Sigmoid colon (tissue), 7 donors: ENCODE measurements at regions of chr22 and their contacts with region 1.

Region 1: GRCh38 chr22:49852898-49853894 is at the start of gene ZBED4:
- DNase-seq: peak; percentile 97
- H3K4me3 ChIP-seq: peak within 1 kb of the TSS; percentile 52 to 70 (median 63)
- H3K27ac ChIP-seq: peak within 1 kb of the TSS; percentile 91 to 94 (median 92)
- H3K4me1 ChIP-seq: peaks cover 0 to 49% (median 40%) of the 10 kb centered on the region in 4 donors
- H3K27me3 ChIP-seq: peaks cover 16 to 26% (median 20%) of the 10 kb centered on the region in 3 donors
- CTCF ChIP-seq: no peak
- EP300 ChIP-seq: peak in 1 of 4 donors; percentile 28
- POLR2A ChIP-seq: peak; percentile 27 to 54
- total RNA-seq, gene ZBED4: 3.9 to 7.5 (median 5.5) TPM

Region 2: GRCh38 chr22:49789289-49790141 is 63.7 kb before region 1 on chr22:
- intact Hi-C with region 1: loop called (anchors 2 kb)
- DNase-seq: no peak
- H3K4me3 ChIP-seq: no peak overlapping the region
- H3K27ac ChIP-seq: peak overlapping the region; percentile 49 to 83 (median 79)
- H3K4me1 ChIP-seq: peaks cover 0 to 91% (median 88%) of the 10 kb centered on the region in 4 donors
- H3K27me3 ChIP-seq: no peaks in the 10 kb centered on the region
- CTCF ChIP-seq: no peak
- EP300 ChIP-seq: no peak
- POLR2A ChIP-seq: no peak

Region 3: GRCh38 chr22:49807780-49808708 is 45.2 kb before region 1 on chr22:
- intact Hi-C with region 1: no loop called
- DNase-seq: no peak
- H3K4me3 ChIP-seq: no peak overlapping the region
- H3K27ac ChIP-seq: peak overlapping the region in 3 of 4 donors; percentile 2 to 69 (median 67)
- H3K4me1 ChIP-seq: peaks cover 0 to 90% (median 68%) of the 10 kb centered on the region in 4 donors
- H3K27me3 ChIP-seq: no peaks in the 10 kb centered on the region
- CTCF ChIP-seq: no peak
- EP300 ChIP-seq: no peak
- POLR2A ChIP-seq: no peak

Region 4: DNA sequence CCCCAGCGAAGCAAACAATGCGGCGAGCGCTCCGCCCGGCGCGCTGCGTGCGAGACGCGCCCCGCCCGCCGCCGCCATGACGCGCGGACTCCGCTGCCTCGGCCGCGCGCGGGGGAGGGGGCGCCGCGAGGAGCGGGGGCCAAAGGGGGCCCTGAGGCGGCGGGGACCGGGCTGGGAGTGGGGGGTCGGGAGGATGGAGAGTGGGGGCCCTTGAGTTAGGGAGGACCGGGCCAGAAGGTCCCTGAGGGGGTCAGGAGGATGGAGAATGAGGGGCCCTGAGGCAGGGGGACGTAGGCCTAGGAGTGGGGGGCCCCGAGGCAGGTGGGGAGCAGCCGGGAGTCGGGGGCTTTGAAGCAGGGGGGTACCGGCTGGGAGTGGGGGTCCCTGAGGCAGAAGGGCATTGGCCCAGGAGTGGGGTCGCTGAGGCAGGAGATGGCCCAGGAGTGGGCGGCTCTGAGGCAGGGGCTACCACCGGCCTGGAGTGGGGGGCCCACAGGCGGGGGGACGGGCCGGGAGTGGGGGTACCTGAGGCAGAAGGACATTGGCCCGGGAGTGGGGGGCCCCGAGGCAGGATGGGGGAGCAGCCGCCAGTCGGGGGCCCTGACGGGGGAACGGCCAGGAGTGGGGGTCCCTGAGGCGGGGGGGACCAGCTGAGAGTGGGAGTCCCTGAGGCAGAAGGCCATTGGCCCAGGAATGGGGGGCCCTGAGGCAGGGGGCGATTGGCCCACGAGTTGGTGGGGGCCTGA is 25.2 kb before region 1 on chr22 and contains the start of gene BRD1:
- intact Hi-C with region 1: loop called (anchors 1 kb)
- DNase-seq: no peak
- H3K4me3 ChIP-seq: peak within 1 kb of the TSS; percentile 67 to 83 (median 74)
- H3K27ac ChIP-seq: peak within 1 kb of the TSS; percentile 86 to 98 (median 90)
- H3K4me1 ChIP-seq: peaks cover 0 to 42% (median 35%) of the 10 kb centered on the region in 4 donors
- H3K27me3 ChIP-seq: no peaks in the 10 kb centered on the region
- CTCF ChIP-seq: no peak
- EP300 ChIP-seq: no peak
- POLR2A ChIP-seq: no peak
- total RNA-seq, gene BRD1: 31.1 to 52.6 (median 35.9) TPM

Region 5: GRCh38 chr22:49917974-49918910 is 65.0 kb after region 1 on chr22 and contains the starts of genes ALG12 and CRELD2:
- intact Hi-C with region 1: loop called (anchors 1 kb)
- DNase-seq: peak; percentile 99
- H3K4me3 ChIP-seq: peak within 1 kb of the TSS; percentile 47 to 93 (median 84)
- H3K27ac ChIP-seq: peak within 1 kb of the TSS; percentile 93 to 97 (median 94)
- H3K4me1 ChIP-seq: peaks cover 0 to 28% (median 22%) of the 10 kb centered on the region in 4 donors
- H3K27me3 ChIP-seq: no peaks in the 10 kb centered on the region
- CTCF ChIP-seq: no peak
- EP300 ChIP-seq: no peak
- POLR2A ChIP-seq: no peak
- total RNA-seq, gene ALG12: 11.4 to 23.9 (median 15.4) TPM
- total RNA-seq, gene CRELD2: 15.5 to 26.5 (median 23.1) TPM

Region 6: GRCh38 chr22:50185384-50186087 is 332.3 kb after region 1 on chr22 and contains the start of gene TRABD:
- intact Hi-C with region 1: loop called (anchors 10 kb)
- DNase-seq: peak; percentile 95
- H3K4me3 ChIP-seq: peak within 1 kb of the TSS; percentile 61 to 90 (median 81)
- H3K27ac ChIP-seq: peak within 1 kb of the TSS; percentile 64 to 77 (median 76)
- H3K4me1 ChIP-seq: peaks cover 0 to 55% (median 50%) of the 10 kb centered on the region in 4 donors
- H3K27me3 ChIP-seq: peaks cover 0 to 2% (median 0%) of the 10 kb centered on the region in 3 donors
- CTCF ChIP-seq: no peak
- EP300 ChIP-seq: no peak
- POLR2A ChIP-seq: no peak
- total RNA-seq, gene TRABD: 14.2 to 21.4 (median 18.2) TPM